GM23248 (cell line): ENCODE measurements at regions of chr20 and their contacts with region 1.

Region 1: DNA sequence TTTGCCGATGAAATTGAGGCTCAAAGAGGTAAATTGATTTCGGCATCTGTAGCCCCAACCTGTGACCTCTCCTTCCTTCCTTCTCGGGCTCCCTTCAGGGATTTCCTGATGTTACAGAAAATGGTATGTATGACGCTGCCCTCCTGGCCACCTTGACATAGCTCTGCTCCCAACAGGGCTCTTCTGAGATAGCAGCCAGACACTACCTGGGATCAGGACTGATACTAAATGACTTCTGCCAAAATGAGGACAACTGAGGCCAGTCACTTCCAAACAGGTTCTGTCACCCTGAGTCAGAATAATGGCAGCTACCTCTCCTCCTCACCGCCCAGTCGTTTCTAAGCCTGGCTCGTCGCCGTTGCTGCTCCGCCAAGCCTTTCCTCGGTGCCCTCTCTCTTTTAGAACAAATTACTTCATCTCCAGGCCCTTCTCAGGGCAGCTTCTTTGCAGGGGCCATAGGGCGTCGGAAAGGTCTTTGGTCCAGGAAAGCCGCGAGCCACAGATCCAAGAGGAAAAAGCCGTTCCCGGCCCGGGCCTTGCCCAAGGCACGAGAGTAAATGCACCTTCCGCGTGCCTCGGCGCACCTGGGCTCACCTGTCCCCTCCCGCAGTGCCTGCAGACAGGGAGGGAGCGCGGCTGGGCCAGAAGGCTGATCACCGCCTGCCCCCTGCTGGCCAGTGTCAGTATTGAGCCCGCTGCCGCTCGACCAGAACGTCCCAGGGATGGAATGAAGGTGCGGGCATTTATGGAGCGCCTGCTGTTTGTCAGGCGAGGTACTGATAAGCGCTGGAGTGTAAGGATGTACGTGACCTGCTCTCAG is 904 bp upstream of the LPIN3 start:
- DNase-seq: peak; percentile 77
- H3K4me3 ChIP-seq: peak overlapping the region; percentile 72
- H3K27ac ChIP-seq: no peak overlapping the region
- H3K4me1 ChIP-seq: no peaks in the 10 kb centered on the region
- H3K27me3 ChIP-seq: no peaks in the 10 kb centered on the region

Region 2: GRCh38 chr20:40990542-40991120 is 349.1 kb before region 1 on chr20:
- in situ Hi-C with region 1: loop called (anchors 25 kb)
- DNase-seq: peak; percentile 94
- H3K4me3 ChIP-seq: no peak overlapping the region
- H3K27ac ChIP-seq: no peak overlapping the region
- H3K4me1 ChIP-seq: 0 out of 2 replicates have a peak, but pooled peaks cover 3% of the 10 kb centered on the region
- H3K27me3 ChIP-seq: no peaks in the 10 kb centered on the region

Region 3: DNA sequence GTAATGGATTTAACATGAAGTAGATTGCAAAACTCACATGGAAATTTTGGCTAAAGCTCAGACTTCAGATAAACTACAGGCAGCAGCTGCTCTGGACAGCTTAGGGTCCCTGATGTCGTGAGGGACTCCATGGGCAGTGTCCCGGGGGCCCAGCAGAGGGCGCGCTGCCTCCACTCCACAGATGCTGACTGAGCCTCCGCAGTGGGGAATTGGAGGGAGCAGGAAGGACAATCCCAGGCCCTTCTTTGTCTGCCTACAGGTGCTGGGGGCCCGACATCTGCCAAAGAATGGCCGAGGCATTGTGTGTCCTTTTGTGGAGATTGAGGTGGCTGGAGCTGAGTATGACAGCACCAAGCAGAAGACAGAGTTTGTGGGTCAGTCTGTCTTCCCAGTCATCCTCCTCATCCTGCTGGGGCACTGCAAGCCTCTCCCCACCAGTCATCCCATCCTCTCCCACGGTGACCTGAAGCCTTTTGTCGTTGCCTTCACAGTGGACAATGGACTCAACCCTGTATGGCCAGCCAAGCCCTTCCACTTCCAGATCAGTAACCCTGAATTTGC is 166.5 kb before region 1 on chr20:
- in situ Hi-C with region 1: loop called (anchors 10 kb)
- DNase-seq: peak; percentile 79
- H3K4me3 ChIP-seq: no peak overlapping the region
- H3K27ac ChIP-seq: no peak overlapping the region
- H3K4me1 ChIP-seq: peaks cover 36% of the 10 kb centered on the region
- H3K27me3 ChIP-seq: no peaks in the 10 kb centered on the region

Region 4: DNA sequence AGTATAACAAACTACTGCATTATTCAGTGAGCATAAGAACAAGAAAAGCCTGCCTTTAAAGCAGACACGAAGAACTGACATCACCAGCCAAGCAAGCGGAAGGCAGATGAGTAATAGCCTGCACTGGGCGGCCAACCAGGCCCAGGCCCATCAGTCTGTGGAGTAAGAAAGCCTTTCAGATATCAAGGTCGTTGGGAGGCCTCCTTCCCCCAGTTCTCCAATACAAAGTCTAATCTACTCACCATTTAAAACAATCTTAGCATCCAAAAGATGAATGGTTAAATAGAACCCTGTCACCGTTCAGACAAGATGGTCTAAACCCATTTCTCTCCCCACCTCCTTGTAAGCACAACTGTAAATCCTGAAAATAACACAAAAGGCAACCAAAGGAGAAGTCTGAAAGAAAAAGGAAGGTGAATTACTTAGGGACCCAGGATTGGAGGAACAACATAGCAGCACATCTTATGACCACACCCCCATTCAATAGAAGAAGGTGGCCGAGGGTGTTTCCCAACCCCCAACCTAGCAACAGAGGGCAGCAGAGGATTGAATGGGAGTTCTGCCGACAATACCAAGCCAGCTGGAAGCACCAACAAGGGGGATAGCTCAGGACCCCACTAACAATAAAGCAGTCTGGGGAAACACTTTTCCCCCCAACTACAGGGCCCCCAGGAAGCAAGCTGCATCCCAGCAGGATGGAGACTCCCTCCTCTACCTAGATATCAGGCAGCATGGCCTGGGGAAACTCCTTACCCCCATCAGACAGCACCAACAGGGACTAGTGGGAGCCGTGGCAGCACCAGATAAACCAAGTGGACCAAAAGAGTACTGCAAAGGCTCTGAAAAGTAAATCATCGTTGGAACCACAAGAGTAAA is 90.1 kb before region 1 on chr20:
- in situ Hi-C with region 1: no loop called
- DNase-seq: peak; percentile 93
- H3K4me3 ChIP-seq: peak overlapping the region; percentile 65
- H3K27ac ChIP-seq: peak overlapping the region; percentile 82
- H3K4me1 ChIP-seq: peaks cover 39% of the 10 kb centered on the region
- H3K27me3 ChIP-seq: no peaks in the 10 kb centered on the region

Region 5: DNA sequence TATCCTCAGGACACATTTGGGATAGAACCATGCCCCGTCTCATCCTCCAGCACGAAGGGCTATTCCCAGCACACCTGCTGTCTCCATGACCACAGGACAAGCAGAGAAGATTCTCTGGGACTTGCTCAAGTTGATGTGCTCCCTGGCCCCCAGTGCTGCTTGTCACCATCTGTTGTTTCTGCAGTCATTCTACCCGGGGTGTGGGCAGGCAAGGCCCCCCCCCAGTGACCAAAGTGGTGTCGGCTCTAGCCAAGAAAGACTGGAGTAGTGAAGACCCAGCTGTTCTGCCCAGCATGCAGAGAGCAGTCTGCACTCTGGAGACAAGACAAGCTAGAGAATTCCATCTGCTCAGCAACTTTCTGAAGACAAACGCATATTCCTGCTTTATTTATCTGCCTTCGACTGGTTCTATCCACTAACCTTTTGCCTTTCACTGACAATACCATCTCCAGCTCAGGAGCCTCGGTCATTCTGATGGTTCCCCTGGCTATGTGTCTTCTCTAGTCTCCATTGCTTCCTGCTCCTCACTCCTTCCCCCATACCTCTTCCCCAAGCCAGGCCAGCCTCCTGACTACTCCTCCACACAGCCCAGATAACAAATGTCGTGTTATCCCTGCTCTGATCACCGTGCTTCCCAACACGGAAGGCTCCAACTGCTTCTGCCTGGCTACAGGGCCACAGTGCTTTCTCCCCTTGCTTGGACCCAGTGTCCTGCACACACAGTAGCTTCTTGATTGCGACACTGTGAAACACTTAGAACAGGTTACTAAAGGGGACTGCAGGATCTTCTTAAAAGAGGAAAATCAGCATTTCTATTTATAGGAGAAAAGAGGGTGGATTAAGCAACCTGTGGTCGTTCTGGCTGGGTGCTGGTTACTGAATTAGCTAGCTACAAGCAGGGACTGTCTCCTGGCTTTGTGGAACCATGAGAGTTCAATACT is 113.6 kb after region 1 on chr20:
- in situ Hi-C with region 1: no loop called
- DNase-seq: no peak
- H3K4me3 ChIP-seq: no peak overlapping the region
- H3K27ac ChIP-seq: no peak overlapping the region
- H3K4me1 ChIP-seq: no peaks in the 10 kb centered on the region
- H3K27me3 ChIP-seq: no peaks in the 10 kb centered on the region

Region 6: GRCh38 chr20:41553142-41553880 is 213.6 kb after region 1 on chr20:
- in situ Hi-C with region 1: no loop called
- DNase-seq: no peak
- H3K4me3 ChIP-seq: no peak overlapping the region
- H3K27ac ChIP-seq: no peak overlapping the region
- H3K4me1 ChIP-seq: no peaks in the 10 kb centered on the region
- H3K27me3 ChIP-seq: no peaks in the 10 kb centered on the region